Sigmoid colon (tissue), 7 donors: ENCODE measurements at regions of chr6 and their contacts with region 1.

Region 1: DNA sequence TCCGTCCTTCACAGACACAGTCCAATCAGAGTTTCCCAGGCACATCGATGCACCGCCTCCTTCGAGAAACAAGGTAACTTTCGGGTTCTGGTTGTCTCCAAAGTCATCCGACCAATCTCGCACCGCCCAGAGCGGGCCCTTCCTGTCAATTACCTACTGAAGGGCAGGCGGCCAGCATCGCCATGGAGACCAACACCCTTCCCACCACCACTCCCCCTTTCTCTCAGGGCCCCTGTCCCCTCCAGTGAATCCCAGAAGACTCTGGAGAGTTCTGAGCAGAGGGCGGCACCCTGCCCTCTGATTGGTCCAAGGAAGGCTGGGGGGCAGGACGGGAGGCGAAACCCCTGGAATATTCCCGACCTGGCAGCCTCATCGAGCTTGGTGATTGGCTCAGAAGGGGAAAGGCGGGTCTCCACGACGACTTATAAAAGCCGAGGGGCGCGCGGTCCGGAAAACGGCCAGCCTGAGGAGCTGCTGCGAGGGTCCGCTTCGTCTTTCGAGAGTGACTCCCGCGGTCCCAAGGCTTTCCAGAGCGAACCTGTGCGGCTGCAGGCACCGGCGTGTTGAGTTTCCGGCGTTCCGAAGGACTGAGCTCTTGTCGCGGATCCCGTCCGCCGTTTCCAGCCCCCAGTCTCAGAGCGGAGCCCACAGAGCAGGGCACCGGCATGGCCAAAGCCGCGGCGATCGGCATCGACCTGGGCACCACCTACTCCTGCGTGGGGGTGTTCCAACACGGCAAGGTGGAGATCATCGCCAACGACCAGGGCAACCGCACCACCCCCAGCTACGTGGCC is at the start of gene HSPA1B:
- DNase-seq: peak; percentile 100
- H3K4me3 ChIP-seq: peak within 1 kb of the TSS; percentile 60 to 74 (median 68)
- H3K27ac ChIP-seq: peak within 1 kb of the TSS; percentile 86 to 98 (median 95)
- H3K4me1 ChIP-seq: peaks cover 0 to 49% (median 45%) of the 10 kb centered on the region in 4 donors
- H3K27me3 ChIP-seq: no peaks in the 10 kb centered on the region
- CTCF ChIP-seq: no peak
- EP300 ChIP-seq: peak in 1 of 4 donors; percentile 93
- POLR2A ChIP-seq: peak; percentile 100
- total RNA-seq, gene HSPA1B: 72.6 to 237 (median 113) TPM

Region 2: GRCh38 chr6:31665501-31666336 is 161.8 kb before region 1 on chr6 and contains the start of gene CSNK2B:
- intact Hi-C with region 1: loop called (anchors 1 kb)
- DNase-seq: peak; percentile 99
- H3K4me3 ChIP-seq: peak within 1 kb of the TSS; percentile 81 to 96 (median 88)
- H3K27ac ChIP-seq: peak within 1 kb of the TSS; percentile 95 to 98 (median 98)
- H3K4me1 ChIP-seq: peaks cover 0 to 60% (median 47%) of the 10 kb centered on the region in 4 donors
- H3K27me3 ChIP-seq: no peaks in the 10 kb centered on the region
- CTCF ChIP-seq: no peak
- EP300 ChIP-seq: no peak
- POLR2A ChIP-seq: peak; percentile 54 to 84
- total RNA-seq, gene CSNK2B: 188 to 227 (median 209) TPM

Region 3: GRCh38 chr6:31729515-31729978 is 97.9 kb before region 1 on chr6:
- intact Hi-C with region 1: loop called (anchors 2 kb)
- DNase-seq: peak; percentile 97
- H3K4me3 ChIP-seq: peak overlapping the region; percentile 78 to 95 (median 84)
- H3K27ac ChIP-seq: peak overlapping the region; percentile 96 to 99 (median 98)
- H3K4me1 ChIP-seq: peaks cover 0 to 39% (median 33%) of the 10 kb centered on the region in 4 donors
- H3K27me3 ChIP-seq: no peaks in the 10 kb centered on the region
- CTCF ChIP-seq: peak in 1 of 4 experiments; percentile 25
- EP300 ChIP-seq: no peak
- POLR2A ChIP-seq: peak; percentile 23 to 29

Region 4: GRCh38 chr6:31795616-31796298 is 31.7 kb before region 1 on chr6 and contains the start of gene VARS1:
- intact Hi-C with region 1: loop called (anchors 1 kb)
- DNase-seq: peak; percentile 96
- H3K4me3 ChIP-seq: peak within 1 kb of the TSS; percentile 80 to 97 (median 90)
- H3K27ac ChIP-seq: peak within 1 kb of the TSS; percentile 90 to 94 (median 91)
- H3K4me1 ChIP-seq: peaks cover 0 to 22% (median 17%) of the 10 kb centered on the region in 4 donors
- H3K27me3 ChIP-seq: no peaks in the 10 kb centered on the region
- CTCF ChIP-seq: peak; percentile 52 to 72 (median 72)
- EP300 ChIP-seq: peak in 1 of 4 donors; percentile 3
- POLR2A ChIP-seq: peak in 1 of 2 donors; percentile 35
- total RNA-seq, gene VARS1: 16.0 to 36.2 (median 27.7) TPM

Region 5: DNA sequence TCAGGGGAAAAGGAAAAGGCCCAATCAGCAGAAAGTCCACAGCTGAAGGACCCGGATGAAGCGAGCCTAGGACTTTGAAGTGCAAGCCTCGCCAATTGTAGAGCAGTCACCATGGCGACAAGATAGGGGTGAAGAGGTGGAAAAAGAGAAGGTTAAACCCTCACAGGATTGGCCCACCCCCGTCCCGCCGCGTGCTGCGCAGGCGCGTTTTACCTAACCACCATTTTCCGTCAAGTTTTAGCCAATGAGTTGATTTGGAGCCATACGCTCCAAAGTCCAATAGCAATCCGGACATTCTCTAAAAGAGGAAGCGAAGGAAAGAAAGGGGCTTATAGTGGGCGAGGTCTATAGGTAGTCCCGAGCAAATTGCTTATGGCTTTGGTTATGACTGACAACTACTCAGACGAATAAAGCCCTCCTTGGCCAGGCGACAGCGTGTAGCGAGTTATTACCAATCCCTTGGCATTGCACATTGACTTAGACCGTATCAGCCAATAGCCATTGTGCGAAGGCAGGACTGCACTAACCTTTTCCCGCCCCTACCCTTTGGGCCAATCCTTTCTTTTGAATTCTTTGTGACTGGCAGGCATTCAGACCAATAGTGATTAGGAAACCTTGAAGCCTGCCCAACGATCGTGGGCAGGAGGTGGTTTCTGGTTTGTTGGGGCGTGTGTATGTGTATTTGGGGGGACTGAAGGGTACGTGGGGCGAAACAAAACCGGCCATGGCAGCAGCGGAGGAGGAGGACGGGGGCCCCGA is 350.5 kb after region 1 on chr6 and contains the start of gene RNF5:
- intact Hi-C with region 1: loop called (anchors 10 kb)
- DNase-seq: peak; percentile 99
- H3K4me3 ChIP-seq: peak within 1 kb of the TSS; percentile 85 to 97 (median 92)
- H3K27ac ChIP-seq: peak within 1 kb of the TSS; percentile 88 to 96 (median 94)
- H3K4me1 ChIP-seq: peaks cover 0 to 71% (median 50%) of the 10 kb centered on the region in 4 donors
- H3K27me3 ChIP-seq: no peaks in the 10 kb centered on the region
- CTCF ChIP-seq: no peak
- EP300 ChIP-seq: peak in 1 of 4 donors; percentile 22
- POLR2A ChIP-seq: peak in 1 of 2 donors; percentile 24
- total RNA-seq, gene RNF5: 61.5 to 118 (median 95.1) TPM